ENCODE measurements at regions of chr15 and their contacts with region 1.

Region 1: GRCh38 chr15:89171136-89172072 is 50.0 kb downstream of the RLBP1 start:
- DNase-seq: peak; percentile 60
- H3K4me3 ChIP-seq: peak overlapping the region in 1 of 2 experiments; percentile 32; a peak in 1 of 4 replicates
- H3K27ac ChIP-seq: no peak overlapping the region
- H3K4me1 ChIP-seq: peaks cover 13 to 20% of the 10 kb centered on the region in 2 experiments; a peak in 3 of 4 replicates
- H3K27me3 ChIP-seq: no peaks in the 10 kb centered on the region
- CTCF ChIP-seq: peak; percentile 83
- EP300 ChIP-seq: no peak
- RAD21 ChIP-seq: peak; percentile 84

Region 2: GRCh38 chr15:88904624-88905327 is 266.6 kb before region 1 on chr15:
- CTCF ChIA-PET with region 1: interaction called, 15 read pairs
- POLR2A ChIA-PET with region 1: no interaction called
- DNase-seq: peak; percentile 84
- H3K4me3 ChIP-seq: no peak overlapping the region; a peak in 1 of 4 replicates
- H3K27ac ChIP-seq: no peak overlapping the region
- H3K4me1 ChIP-seq: no peaks in the 10 kb centered on the region; a peak in 1 of 4 replicates
- H3K27me3 ChIP-seq: no peaks in the 10 kb centered on the region
- CTCF ChIP-seq: peak; percentile 98
- EP300 ChIP-seq: no peak
- RAD21 ChIP-seq: peak; percentile 88

Region 3: GRCh38 chr15:89087830-89088604 is 83.4 kb before region 1 on chr15 and contains the start of gene ABHD2:
- CTCF ChIA-PET with region 1: interaction called, 19 read pairs
- POLR2A ChIA-PET with region 1: no interaction called
- DNase-seq: peak; percentile 90
- H3K4me3 ChIP-seq: peak within 1 kb of the TSS; percentile 85 to 97
- H3K27ac ChIP-seq: peak within 1 kb of the TSS; percentile 97 to 98
- H3K4me1 ChIP-seq: peaks cover 31 to 70% of the 10 kb centered on the region in 2 experiments
- H3K27me3 ChIP-seq: no peaks in the 10 kb centered on the region
- CTCF ChIP-seq: no peak
- EP300 ChIP-seq: peak in 1 of 2 experiments; percentile 78; a peak in 3 of 4 replicates
- RAD21 ChIP-seq: no peak
- polyA plus RNA-seq, gene ABHD2: 19.2 and 25.7 TPM in 2 replicates

Region 4: GRCh38 chr15:89119489-89120123 is 51.8 kb before region 1 on chr15:
- CTCF ChIA-PET with region 1: interaction called, 20 read pairs
- POLR2A ChIA-PET with region 1: no interaction called
- DNase-seq: no peak
- H3K4me3 ChIP-seq: no peak overlapping the region
- H3K27ac ChIP-seq: peak overlapping the region in 1 of 2 experiments; percentile 79; a peak in 2 of 4 replicates
- H3K4me1 ChIP-seq: peaks cover 7 to 10% of the 10 kb centered on the region in 2 experiments; a peak in 2 of 4 replicates
- H3K27me3 ChIP-seq: no peaks in the 10 kb centered on the region
- CTCF ChIP-seq: no peak
- EP300 ChIP-seq: no peak
- RAD21 ChIP-seq: no peak

Region 5: GRCh38 chr15:89143503-89144162 is 27.8 kb before region 1 on chr15:
- CTCF ChIA-PET with region 1: interaction called, 31 read pairs
- POLR2A ChIA-PET with region 1: no interaction called
- DNase-seq: peak; percentile 36
- H3K4me3 ChIP-seq: peak overlapping the region in 1 of 2 experiments; percentile 18; a peak in 1 of 4 replicates
- H3K27ac ChIP-seq: peak overlapping the region; percentile 77 to 96; a peak in 3 of 4 replicates
- H3K4me1 ChIP-seq: peaks cover 19 to 46% of the 10 kb centered on the region in 2 experiments
- H3K27me3 ChIP-seq: no peaks in the 10 kb centered on the region
- CTCF ChIP-seq: no peak
- EP300 ChIP-seq: peak; percentile 26 to 54
- RAD21 ChIP-seq: no peak

Measured in SK-N-SH (cell line).